ENCODE measurements at regions of chr20 and their contacts with region 1.

Region 1: GRCh38 chr20:63381807-63382322 is 20.7 kb upstream of the CHRNA4 start:
- DNase-seq: no peak

Region 2: GRCh38 chr20:63309261-63310071 is 72.4 kb before region 1 on chr20:
- intact Hi-C with region 1: loop called (anchors 2 to 5 kb)
- DNase-seq: no peak

Region 3: DNA sequence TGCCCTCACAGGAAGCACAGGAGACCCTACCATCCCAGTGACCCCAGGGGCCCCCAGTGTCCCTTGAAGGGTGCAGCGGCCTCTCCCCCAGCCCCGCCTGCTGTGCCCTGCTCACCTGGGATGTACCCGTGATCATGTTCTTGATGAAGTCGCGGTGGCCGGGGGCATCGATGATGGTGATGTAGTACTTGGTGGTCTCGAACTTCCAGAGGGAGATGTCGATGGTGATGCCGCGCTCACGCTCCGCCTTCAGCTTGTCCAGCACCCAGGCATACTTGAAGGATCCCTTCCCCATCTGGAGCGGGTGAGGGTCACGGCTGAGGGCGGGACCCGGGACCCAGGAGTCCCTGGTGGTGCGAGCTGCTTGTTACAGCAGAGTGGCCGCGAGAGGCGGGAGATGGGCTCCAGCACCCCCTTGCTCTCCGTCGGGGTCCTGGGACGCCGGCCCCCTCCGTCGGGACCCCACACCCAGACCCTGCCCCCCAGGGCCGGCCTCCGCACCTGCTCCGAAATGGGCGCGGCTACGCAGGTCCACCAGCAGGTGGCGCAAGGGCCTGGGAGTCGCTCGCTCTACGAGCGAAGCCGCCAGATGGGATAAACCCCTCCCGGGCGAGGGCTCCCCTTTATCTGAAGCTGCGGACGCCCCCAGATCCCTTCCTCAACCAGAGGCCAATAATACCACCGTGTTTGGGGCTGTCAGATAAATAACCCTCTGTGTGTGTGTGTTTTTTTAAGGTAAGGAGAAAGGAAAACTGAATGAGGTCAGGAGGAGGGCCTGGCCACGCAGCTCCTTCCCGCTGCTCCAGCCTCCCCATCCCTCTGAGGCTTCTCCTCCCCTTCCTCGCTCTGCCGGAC is 114.1 kb after region 1 on chr20:
- intact Hi-C with region 1: no loop called
- DNase-seq: no peak